Gastrocnemius medialis (tissue), 4 donors: ENCODE measurements at regions of chr7 and their contacts with region 1.

Region 1: GRCh38 chr7:151028131-151028947 is at the start of gene ABCB8:
- DNase-seq: peak; percentile 99 to 100
- ATAC-seq: peak; percentile 99 to 100
- H3K4me3 ChIP-seq: peak within 1 kb of the TSS; percentile 66 to 82 (median 74)
- H3K27ac ChIP-seq: peak within 1 kb of the TSS; percentile 87 to 94 (median 88)
- H3K4me1 ChIP-seq: peaks cover 9 to 12% of the 10 kb centered on the region in 2 donors
- H3K27me3 ChIP-seq: no peaks in the 10 kb centered on the region
- CTCF ChIP-seq: peak; percentile 49 to 77 (median 66)
- POLR2A ChIP-seq: peak; percentile 79 to 83
- total RNA-seq, gene ABCB8: 10.4 to 25.7 (median 16.2) TPM

Region 2: GRCh38 chr7:150404805-150405583 is 623.3 kb before region 1 on chr7:
- in situ Hi-C with region 1: no loop called
- intact Hi-C with region 1: loop called (anchors 10 kb)
- DNase-seq: peak; percentile 73 to 83
- ATAC-seq: peak; percentile 85
- H3K4me3 ChIP-seq: peak overlapping the region; percentile 69 to 83 (median 74)
- H3K27ac ChIP-seq: peak overlapping the region; percentile 94 to 97 (median 96)
- H3K4me1 ChIP-seq: peaks cover 5 to 9% of the 10 kb centered on the region in 2 donors
- H3K27me3 ChIP-seq: no peaks in the 10 kb centered on the region
- CTCF ChIP-seq: peak in 1 of 5 experiments; percentile 42
- POLR2A ChIP-seq: peak; percentile 62 to 73

Region 3: DNA sequence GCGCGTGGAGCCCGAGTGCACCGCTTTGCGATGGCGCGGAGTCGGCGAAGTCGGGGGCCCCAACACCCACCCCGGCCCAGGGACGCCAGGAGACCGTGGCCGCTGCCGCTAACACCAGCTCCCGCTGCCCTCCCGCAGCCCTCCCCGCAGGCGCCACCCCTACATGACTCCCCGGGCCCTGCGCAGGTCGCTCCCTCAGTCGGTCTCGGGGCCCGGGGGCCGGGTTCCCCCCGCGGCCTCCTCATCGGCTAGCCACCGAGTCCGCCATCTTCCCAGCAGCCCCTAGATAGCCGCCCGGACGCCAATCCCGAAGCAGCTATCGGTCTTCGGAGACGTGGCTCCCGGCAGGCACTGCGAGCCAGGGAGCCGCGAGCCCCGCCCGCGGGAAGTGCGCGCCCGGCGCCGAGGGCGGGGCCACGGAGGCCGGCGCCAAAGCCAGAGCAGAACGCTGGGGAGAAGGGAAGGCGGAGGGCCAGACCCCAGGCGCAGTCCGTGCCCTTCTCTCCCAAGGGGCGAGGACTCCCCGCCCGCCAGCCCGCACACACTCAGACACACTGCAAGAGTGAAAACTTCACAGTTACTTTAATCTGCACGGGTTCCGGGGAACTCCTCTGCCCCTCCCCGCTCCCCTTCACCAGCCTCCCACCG is 52.3 kb after region 1 on chr7 and contains the start of gene FASTK:
- in situ Hi-C with region 1: no loop called
- intact Hi-C with region 1: loop called (anchors 1 kb)
- DNase-seq: peak; percentile 87 to 90
- ATAC-seq: peak; percentile 77 to 85
- H3K4me3 ChIP-seq: peak within 1 kb of the TSS; percentile 96 to 99 (median 98)
- H3K27ac ChIP-seq: peak within 1 kb of the TSS; percentile 90 to 99 (median 94)
- H3K4me1 ChIP-seq: peaks cover 34 to 47% of the 10 kb centered on the region in 2 donors
- H3K27me3 ChIP-seq: no peaks in the 10 kb centered on the region
- CTCF ChIP-seq: no peak
- POLR2A ChIP-seq: peak; percentile 70 to 79
- total RNA-seq, gene FASTK: 108 to 181 (median 141) TPM

Region 4: GRCh38 chr7:151104411-151105235 is 76.3 kb after region 1 on chr7:
- in situ Hi-C with region 1: loop called in 2 of 4 experiments (anchors 10 kb)
- intact Hi-C with region 1: no loop called
- DNase-seq: no peak
- ATAC-seq: no peak
- H3K4me3 ChIP-seq: no peak overlapping the region
- H3K27ac ChIP-seq: no peak overlapping the region
- H3K4me1 ChIP-seq: peaks cover 0 to 10% of the 10 kb centered on the region in 2 donors
- H3K27me3 ChIP-seq: no peaks in the 10 kb centered on the region
- CTCF ChIP-seq: no peak
- POLR2A ChIP-seq: no peak

Region 5: GRCh38 chr7:151172273-151173141 is 144.2 kb after region 1 on chr7:
- in situ Hi-C with region 1: no loop called
- intact Hi-C with region 1: loop called (anchors 5 kb)
- DNase-seq: peak; percentile 53 to 71
- ATAC-seq: peak; percentile 60 to 79
- H3K4me3 ChIP-seq: no peak overlapping the region
- H3K27ac ChIP-seq: peak overlapping the region in 1 of 4 donors; percentile 33
- H3K4me1 ChIP-seq: peaks cover 3 to 17% of the 10 kb centered on the region in 2 donors
- H3K27me3 ChIP-seq: no peaks in the 10 kb centered on the region
- CTCF ChIP-seq: peak; percentile 99 to 100 (median 100)
- POLR2A ChIP-seq: no peak

Region 6: GRCh38 chr7:151341357-151342101 is 313.2 kb after region 1 on chr7 and contains the start of gene NUB1:
- in situ Hi-C with region 1: no loop called
- intact Hi-C with region 1: loop called (anchors 1 kb)
- DNase-seq: peak; percentile 88 to 89
- ATAC-seq: peak; percentile 96 to 97
- H3K4me3 ChIP-seq: peak within 1 kb of the TSS; percentile 72 to 77 (median 74)
- H3K27ac ChIP-seq: peak within 1 kb of the TSS; percentile 73 to 90 (median 86)
- H3K4me1 ChIP-seq: peaks cover 9 to 20% of the 10 kb centered on the region in 2 donors
- H3K27me3 ChIP-seq: no peaks in the 10 kb centered on the region
- CTCF ChIP-seq: no peak
- POLR2A ChIP-seq: peak; percentile 88 to 93
- total RNA-seq, gene NUB1: 45.3 to 59.0 (median 49.7) TPM